Esophagus squamous epithelium (tissue), 5 donors: ENCODE measurements at regions of chr2 and their contacts with region 1.

Region 1: GRCh38 chr2:128321784-128322714 is 3.4 kb upstream of the HS6ST1 start:
- DNase-seq: no peak
- H3K4me3 ChIP-seq: peak overlapping the region; percentile 48 to 83 (median 72)
- H3K27ac ChIP-seq: peak overlapping the region; percentile 84 to 88 (median 86)
- H3K4me1 ChIP-seq: peaks cover 22 to 79% (median 23%) of the 10 kb centered on the region in 3 donors
- H3K27me3 ChIP-seq: no peaks in the 10 kb centered on the region
- CTCF ChIP-seq: peak; percentile 95 to 99 (median 97)
- POLR2A ChIP-seq: peak in 1 of 4 donors; percentile 36

Region 2: DNA sequence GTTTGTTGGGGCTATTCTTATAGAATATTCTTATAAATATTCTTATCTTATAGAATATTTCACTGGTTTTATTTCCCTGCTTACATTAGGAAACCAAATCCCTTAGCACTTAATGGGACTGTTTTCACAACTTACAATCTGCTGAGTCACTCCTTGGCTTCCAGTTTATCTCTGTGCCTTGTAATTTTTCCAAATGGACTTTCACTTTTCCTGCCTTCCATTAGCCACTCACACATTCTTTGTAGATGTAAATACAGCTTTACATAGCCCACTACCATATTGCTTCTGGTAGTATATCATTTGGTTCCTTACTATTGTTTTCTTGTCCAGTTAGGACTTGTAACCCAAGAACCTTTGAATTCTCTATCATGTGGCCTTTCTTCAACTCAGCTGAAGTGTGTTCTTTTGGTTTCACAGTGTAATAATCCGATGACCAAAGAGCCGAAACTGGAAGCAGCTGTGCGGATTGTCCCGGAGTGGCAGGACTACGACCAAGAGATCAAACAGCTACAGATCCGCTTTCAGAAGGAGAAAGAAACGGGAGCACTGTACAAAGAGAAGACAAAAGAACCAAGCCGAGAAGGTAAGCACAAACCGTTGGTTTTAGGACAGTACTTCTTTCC is 134.9 kb before region 1 on chr2:
- intact Hi-C with region 1: loop called (anchors 10 kb)
- DNase-seq: no peak
- H3K4me3 ChIP-seq: no peak overlapping the region
- H3K27ac ChIP-seq: no peak overlapping the region
- H3K4me1 ChIP-seq: no peaks in the 10 kb centered on the region
- H3K27me3 ChIP-seq: no peaks in the 10 kb centered on the region
- CTCF ChIP-seq: no peak
- POLR2A ChIP-seq: no peak

Region 3: GRCh38 chr2:128746356-128746755 is 424.3 kb after region 1 on chr2:
- intact Hi-C with region 1: loop called (anchors 10 kb)
- DNase-seq: no peak
- H3K4me3 ChIP-seq: no peak overlapping the region
- H3K27ac ChIP-seq: no peak overlapping the region
- H3K4me1 ChIP-seq: peaks cover 0 to 10% (median 4%) of the 10 kb centered on the region in 3 donors
- H3K27me3 ChIP-seq: no peaks in the 10 kb centered on the region
- CTCF ChIP-seq: no peak
- POLR2A ChIP-seq: no peak